ENCODE measurements at regions of chr7 and their contacts with region 1.

Region 1: DNA sequence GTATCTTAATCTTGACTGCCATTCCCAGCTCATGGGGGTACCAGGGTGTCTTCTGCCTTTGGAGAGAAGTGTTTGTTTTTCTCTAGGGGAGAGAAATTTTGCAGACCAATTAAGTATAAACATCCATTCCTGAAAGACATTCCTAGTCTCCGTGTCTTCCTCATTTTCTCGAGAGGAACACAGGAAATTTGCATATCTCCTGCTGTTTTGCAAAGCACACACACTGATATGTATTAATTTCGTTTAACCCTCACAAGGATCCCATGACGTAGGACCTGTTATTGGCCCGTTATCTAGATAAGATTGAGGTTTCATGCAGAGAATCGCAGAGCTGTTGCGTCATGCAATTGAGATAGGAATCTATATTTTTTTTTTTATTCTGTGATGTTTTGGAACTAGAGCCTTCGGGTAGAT is 944 bp downstream of the RHBDD2 start:
- DNase-seq: no peak
- ATAC-seq: no peak
- H3K4me3 ChIP-seq: peak overlapping the region; percentile 76 to 99
- H3K27ac ChIP-seq: peak overlapping the region; percentile 67 to 81
- H3K4me1 ChIP-seq: peaks cover 13 to 53% of the 10 kb centered on the region in 2 donors
- H3K27me3 ChIP-seq: no peaks in the 10 kb centered on the region
- CTCF ChIP-seq: no peak

Region 2: GRCh38 chr7:75795831-75796285 is 83.9 kb before region 1 on chr7:
- intact Hi-C with region 1: no loop called
- DNase-seq: peak in 2 of 4 donors; percentile 43 to 70
- ATAC-seq: peak; percentile 81
- H3K4me3 ChIP-seq: no peak overlapping the region
- H3K27ac ChIP-seq: peak overlapping the region in 1 of 2 donors; percentile 25
- H3K4me1 ChIP-seq: peaks cover 3 to 19% of the 10 kb centered on the region in 2 donors
- H3K27me3 ChIP-seq: no peaks in the 10 kb centered on the region
- CTCF ChIP-seq: no peak

Region 3: DNA sequence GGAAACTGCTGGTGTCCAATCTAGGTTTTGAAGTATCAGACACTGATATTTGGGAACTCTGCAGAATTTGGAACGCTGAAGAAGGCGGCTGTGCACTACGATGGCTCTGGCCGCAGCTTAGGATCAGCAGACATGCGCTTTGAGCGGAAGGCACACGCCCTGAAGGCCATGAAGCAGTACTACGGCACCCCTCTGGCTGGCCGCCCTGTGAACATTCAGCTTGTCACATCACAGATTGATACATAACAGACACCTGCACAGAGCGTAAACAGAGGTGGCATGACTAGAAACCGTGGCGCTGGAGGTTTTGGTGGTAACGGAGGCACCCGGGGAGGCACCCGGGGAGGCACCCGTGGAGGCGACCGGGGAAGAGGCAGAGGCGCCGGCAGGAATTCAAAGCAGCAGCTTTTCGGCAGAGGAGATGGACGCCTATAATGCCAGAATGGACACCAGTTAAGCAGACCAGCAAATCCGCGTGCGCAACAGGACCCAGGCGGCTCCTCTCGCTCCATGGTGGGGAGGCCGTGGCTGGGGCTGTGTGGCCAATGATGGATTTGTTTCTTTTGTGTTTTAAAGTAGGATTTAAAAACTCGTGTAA is 44.0 kb before region 1 on chr7:
- intact Hi-C with region 1: no loop called
- DNase-seq: no peak
- ATAC-seq: no peak
- H3K4me3 ChIP-seq: no peak overlapping the region
- H3K27ac ChIP-seq: no peak overlapping the region
- H3K4me1 ChIP-seq: no peaks in the 10 kb centered on the region
- H3K27me3 ChIP-seq: no peaks in the 10 kb centered on the region
- CTCF ChIP-seq: no peak

Region 4: GRCh38 chr7:75994388-75995051 is 114.7 kb after region 1 on chr7 and contains the start of gene TMEM120A:
- intact Hi-C with region 1: loop called in 1 of 2 experiments (anchors 10 kb)
- DNase-seq: peak; percentile 87 to 98 (median 94)
- ATAC-seq: peak; percentile 98
- H3K4me3 ChIP-seq: peak within 1 kb of the TSS; percentile 89 to 99
- H3K27ac ChIP-seq: peak within 1 kb of the TSS; percentile 85 to 88
- H3K4me1 ChIP-seq: peaks cover 10 to 52% of the 10 kb centered on the region in 2 donors
- H3K27me3 ChIP-seq: no peaks in the 10 kb centered on the region
- CTCF ChIP-seq: peak; percentile 20 to 41
- polyA plus RNA-seq, gene TMEM120A: 32.9 to 40.9 (median 38.4) TPM

Region 5: DNA sequence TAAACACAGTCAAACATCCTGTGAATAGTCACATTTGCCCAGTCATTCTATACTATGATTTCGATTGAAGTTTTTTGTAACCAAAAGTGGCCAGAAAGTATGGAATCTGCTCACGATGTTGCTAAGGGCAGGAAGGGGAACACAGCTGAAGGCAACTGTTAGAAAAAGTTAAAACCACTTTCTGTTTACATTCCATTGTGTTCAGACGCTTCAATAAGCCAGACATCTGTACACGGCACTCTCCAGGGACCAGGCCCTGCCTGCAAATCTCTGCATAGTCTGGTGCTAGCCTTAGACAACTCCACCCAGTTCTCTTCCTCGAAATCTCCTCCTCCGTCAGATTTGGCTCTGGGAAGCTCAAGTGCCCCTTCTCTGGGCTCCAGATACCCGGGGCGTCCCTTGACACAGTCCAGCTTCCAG is 131.7 kb after region 1 on chr7:
- intact Hi-C with region 1: no loop called
- DNase-seq: peak in 1 of 4 donors; percentile 58
- ATAC-seq: peak; percentile 44
- H3K4me3 ChIP-seq: no peak overlapping the region
- H3K27ac ChIP-seq: peak overlapping the region in 1 of 2 donors; percentile 1
- H3K4me1 ChIP-seq: peaks cover 11 to 39% of the 10 kb centered on the region in 2 donors
- H3K27me3 ChIP-seq: no peaks in the 10 kb centered on the region
- CTCF ChIP-seq: no peak

Region 6: GRCh38 chr7:76037310-76037709 is 157.5 kb after region 1 on chr7:
- intact Hi-C with region 1: no loop called
- DNase-seq: no peak
- ATAC-seq: peak; percentile 17
- H3K4me3 ChIP-seq: no peak overlapping the region
- H3K27ac ChIP-seq: no peak overlapping the region
- H3K4me1 ChIP-seq: no peaks in the 10 kb centered on the region
- H3K27me3 ChIP-seq: no peaks in the 10 kb centered on the region
- CTCF ChIP-seq: no peak

Measured in left lung (tissue), 14 donors.